Activated CD4-positive, alpha-beta T cell treated with anti-CD3 and anti-CD28 coated beads for 36 hours (primary cell): ENCODE measurements at regions of chr2 and their contacts with region 1.

Region 1: DNA sequence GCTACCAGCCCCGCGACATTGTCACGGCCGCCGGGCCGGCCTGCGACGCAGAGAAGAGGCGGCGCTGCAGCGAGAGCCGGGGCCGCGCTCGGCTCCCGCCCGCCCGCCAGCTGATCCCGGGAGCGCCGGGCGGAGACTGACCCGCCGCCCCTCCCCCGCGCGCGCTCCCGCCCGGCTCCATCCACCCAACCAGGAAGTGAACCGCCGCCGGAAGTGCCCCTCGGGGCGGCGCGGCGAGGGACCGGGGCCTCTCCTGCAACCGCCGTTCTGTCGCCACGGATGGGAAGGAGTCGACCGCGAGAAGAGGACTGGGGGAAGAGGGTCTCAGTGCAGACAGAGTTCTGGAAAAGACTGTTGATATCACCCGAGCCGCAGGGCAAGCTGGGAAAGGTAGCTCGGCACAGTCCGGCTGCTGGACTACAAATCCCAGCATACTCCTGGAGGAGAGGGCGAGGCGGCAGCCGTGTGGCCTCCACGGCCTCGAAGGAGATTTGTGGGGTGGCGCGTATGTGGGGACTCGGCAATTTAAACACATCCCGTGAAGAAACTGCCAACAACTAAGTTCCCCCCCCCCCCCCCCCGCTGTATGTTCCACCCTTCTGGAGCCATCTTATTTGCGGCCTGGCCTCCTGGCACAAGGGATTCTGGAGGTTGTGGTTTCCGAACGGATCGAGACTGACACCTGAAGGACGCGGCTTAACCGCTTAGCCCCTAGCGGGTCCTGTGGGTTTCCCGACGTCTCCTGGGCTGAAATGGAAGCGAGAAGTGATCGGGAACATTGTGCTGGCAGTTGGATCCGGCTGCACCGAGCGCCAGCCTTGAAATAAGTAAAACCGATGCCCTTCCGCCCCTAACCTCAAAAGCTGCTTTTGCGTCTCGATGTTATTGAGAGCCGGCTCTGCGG is at the start of gene AAK1:
- DNase-seq: peak; percentile 94
- ATAC-seq: peak; percentile 60
- H3K4me3 Mint-ChIP-seq: peak within 1 kb of the TSS; percentile 82
- H3K27ac Mint-ChIP-seq: peak within 1 kb of the TSS; percentile 99
- H3K4me1 Mint-ChIP-seq: peaks cover 50% of the 10 kb centered on the region
- H3K27me3 Mint-ChIP-seq: no peaks in the 10 kb centered on the region
- total RNA-seq, gene AAK1: 95.9 to 104 TPM

Region 2: DNA sequence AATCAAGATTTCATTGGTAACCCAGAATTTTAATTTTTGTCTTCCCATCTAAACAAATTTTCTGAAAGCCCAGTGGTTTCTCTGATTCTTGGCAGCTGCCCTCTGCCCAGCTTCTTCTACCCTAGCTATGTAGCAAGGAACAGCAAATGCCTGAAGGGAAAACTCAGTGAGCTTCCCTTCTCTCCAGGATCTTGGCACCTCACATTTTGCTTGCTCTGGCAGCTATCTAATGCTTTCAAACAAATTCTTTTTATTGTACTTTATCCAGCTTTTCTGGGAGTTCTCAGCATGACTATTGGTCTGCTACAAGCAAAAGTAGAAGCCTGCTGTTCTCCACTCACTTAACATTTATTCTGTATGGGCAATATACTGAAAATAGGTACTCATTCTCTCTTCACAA is 238.5 kb before region 1 on chr2:
- CTCF ChIA-PET with region 1: no interaction called
- POLR2A ChIA-PET with region 1: no interaction called
- intact Hi-C with region 1: no loop called
- DNase-seq: no peak
- ATAC-seq: no peak
- H3K4me3 Mint-ChIP-seq: no peak overlapping the region
- H3K27ac Mint-ChIP-seq: no peak overlapping the region
- H3K4me1 Mint-ChIP-seq: peaks cover 8% of the 10 kb centered on the region
- H3K27me3 Mint-ChIP-seq: no peaks in the 10 kb centered on the region

Region 3: DNA sequence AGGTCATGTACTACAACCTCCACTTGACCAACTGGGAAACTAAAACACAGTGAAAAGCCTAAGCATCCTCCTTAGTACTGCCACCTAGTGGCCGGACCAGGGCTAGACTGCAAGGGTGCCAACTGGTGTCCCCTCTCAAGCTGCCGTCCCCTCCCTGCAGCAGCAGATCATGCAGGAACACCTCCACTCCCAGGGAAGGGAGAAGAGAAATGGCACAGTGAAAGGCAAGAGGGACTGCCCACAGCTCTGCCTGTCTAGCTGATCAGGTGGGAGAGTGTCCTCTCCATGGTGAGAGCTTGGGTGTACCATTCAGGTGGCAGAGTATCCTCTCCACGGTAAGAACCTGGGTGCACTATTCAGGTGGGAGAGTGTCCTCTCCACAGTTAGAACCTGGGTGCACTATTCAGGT is 78.4 kb before region 1 on chr2:
- CTCF ChIA-PET with region 1: interaction called, 24 read pairs
- POLR2A ChIA-PET with region 1: no interaction called
- intact Hi-C with region 1: loop called (anchors 2 to 10 kb)
- DNase-seq: peak; percentile 83
- ATAC-seq: peak; percentile 78
- H3K4me3 Mint-ChIP-seq: no peak overlapping the region
- H3K27ac Mint-ChIP-seq: peak overlapping the region; percentile 52
- H3K4me1 Mint-ChIP-seq: peaks cover 93% of the 10 kb centered on the region
- H3K27me3 Mint-ChIP-seq: no peaks in the 10 kb centered on the region

Region 4: GRCh38 chr2:69616756-69617155 is 27.1 kb before region 1 on chr2:
- CTCF ChIA-PET with region 1: interaction called, 15 read pairs
- POLR2A ChIA-PET with region 1: no interaction called
- intact Hi-C with region 1: loop called in 1 of 2 experiments (anchors 2 kb)
- DNase-seq: peak; percentile 65
- ATAC-seq: peak; percentile 30
- H3K4me3 Mint-ChIP-seq: peak overlapping the region; percentile 11
- H3K27ac Mint-ChIP-seq: peak overlapping the region; percentile 73
- H3K4me1 Mint-ChIP-seq: peaks cover 41% of the 10 kb centered on the region
- H3K27me3 Mint-ChIP-seq: no peaks in the 10 kb centered on the region

Region 5: DNA sequence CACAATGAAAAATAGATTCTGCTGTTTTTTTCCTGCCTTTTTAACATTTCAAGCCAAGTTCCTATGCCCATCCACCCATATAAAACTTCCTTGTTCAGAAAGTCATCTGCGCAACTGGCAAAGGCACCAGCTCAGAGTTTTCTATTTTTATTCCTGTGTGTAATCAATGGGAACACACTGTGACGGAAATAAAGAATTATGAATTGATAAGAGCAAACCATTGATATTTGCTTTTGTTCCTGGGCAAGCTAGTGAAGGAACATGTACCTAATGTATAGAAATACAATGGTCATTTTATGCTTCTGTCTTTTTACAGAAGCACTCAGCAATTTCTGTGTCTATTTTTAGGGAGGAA is 30.4 kb after region 1 on chr2:
- CTCF ChIA-PET with region 1: interaction called, 3 read pairs
- POLR2A ChIA-PET with region 1: interaction called, 5 read pairs
- intact Hi-C with region 1: loop called (anchors 1 kb)
- DNase-seq: no peak
- ATAC-seq: no peak
- H3K4me3 Mint-ChIP-seq: no peak overlapping the region
- H3K27ac Mint-ChIP-seq: peak overlapping the region; percentile 13
- H3K4me1 Mint-ChIP-seq: peaks cover 32% of the 10 kb centered on the region
- H3K27me3 Mint-ChIP-seq: no peaks in the 10 kb centered on the region

Region 6: DNA sequence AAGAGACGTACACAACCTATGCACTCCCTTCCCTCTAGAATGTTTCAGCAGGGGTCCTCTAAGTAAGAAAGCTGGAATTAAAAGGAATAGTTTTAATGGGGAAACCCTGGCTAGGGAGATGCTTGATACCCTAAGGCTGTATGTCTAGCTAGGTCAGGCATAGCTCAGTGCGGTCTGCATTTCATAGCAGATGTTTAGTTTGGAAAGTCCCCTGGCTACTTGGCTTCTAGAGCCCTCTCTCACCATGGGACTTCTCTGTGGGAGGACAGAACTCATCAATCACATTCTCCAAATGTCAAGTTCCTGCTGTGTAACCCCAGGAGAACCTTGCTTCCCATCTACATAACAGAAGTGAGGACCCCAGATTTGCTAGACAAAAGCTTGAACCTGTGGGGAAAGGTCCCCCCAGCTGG is 74.0 kb after region 1 on chr2:
- CTCF ChIA-PET with region 1: interaction called, 10 read pairs
- POLR2A ChIA-PET with region 1: interaction called, 3 read pairs
- intact Hi-C with region 1: loop called (anchors 1 to 2 kb)
- DNase-seq: no peak
- ATAC-seq: no peak
- H3K4me3 Mint-ChIP-seq: no peak overlapping the region
- H3K27ac Mint-ChIP-seq: no peak overlapping the region
- H3K4me1 Mint-ChIP-seq: peaks cover 15% of the 10 kb centered on the region
- H3K27me3 Mint-ChIP-seq: no peaks in the 10 kb centered on the region

Region 7: GRCh38 chr2:70086838-70087701 is 443.2 kb after region 1 on chr2 and contains the start of gene PCBP1:
- CTCF ChIA-PET with region 1: no interaction called
- POLR2A ChIA-PET with region 1: no interaction called
- intact Hi-C with region 1: loop called (anchors 5 to 10 kb)
- DNase-seq: peak; percentile 98
- ATAC-seq: peak; percentile 37
- H3K4me3 Mint-ChIP-seq: peak within 1 kb of the TSS; percentile 100
- H3K27ac Mint-ChIP-seq: peak within 1 kb of the TSS; percentile 100
- H3K4me1 Mint-ChIP-seq: peaks cover 52% of the 10 kb centered on the region
- H3K27me3 Mint-ChIP-seq: no peaks in the 10 kb centered on the region
- total RNA-seq, gene PCBP1: 417 to 450 TPM